HCT116 (cell line): ENCODE measurements at regions of chr3 and their contacts with region 1.

Region 1: DNA sequence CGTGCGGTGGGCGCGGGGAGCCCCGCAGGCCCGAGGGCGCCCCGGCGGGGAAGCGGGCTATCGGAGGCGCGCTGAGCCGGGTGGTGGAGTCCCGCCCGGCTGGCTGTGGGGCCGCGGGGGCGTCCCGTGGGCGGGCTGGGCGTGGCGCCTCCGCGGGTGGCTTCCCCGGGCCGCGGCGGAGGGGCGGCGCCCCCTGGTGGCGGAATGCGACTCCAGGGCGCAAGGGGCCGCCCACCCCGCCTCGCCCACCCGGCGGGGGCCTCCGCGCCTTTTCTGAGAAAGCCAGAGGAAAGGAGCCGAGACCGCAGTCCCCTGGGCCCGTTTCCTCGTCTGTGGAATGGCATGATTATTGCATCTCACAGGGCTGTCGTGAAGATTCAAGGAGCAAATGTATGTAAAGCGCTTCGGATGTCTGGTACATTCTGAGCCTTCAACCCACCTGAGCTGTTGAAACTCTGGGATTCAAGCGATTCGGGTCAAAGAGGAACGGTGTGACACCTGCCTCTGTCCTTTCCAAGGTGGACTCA is 31.9 kb upstream of the RAB6B start:
- DNase-seq: no peak
- ATAC-seq: peak; percentile 85
- H3K4me3 ChIP-seq: peak overlapping the region in 1 of 2 experiments; percentile 16; a peak in 1 of 4 replicates
- H3K27ac ChIP-seq: no peak overlapping the region
- H3K4me1 ChIP-seq: peaks cover 0 to 9% of the 10 kb centered on the region in 2 experiments; a peak in 2 of 4 replicates
- H3K27me3 ChIP-seq: no peaks in the 10 kb centered on the region; the same call in 1 of the 2 replicates
- CTCF ChIP-seq: peak; percentile 12 to 68 (median 62); a peak in 4 of 6 replicates
- POLR2A ChIP-seq: no peak
- RAD21 ChIP-seq: peak; percentile 61

Region 2: GRCh38 chr3:133464573-133464972 is 463.0 kb before region 1 on chr3:
- CTCF ChIA-PET with region 1: no interaction called
- POLR2A ChIA-PET with region 1: no interaction called
- RAD21 ChIA-PET with region 1: no interaction called
- intact Hi-C with region 1: loop called (anchors 10 kb)
- DNase-seq: no peak
- ATAC-seq: peak; percentile 85
- H3K4me3 ChIP-seq: no peak overlapping the region
- H3K27ac ChIP-seq: no peak overlapping the region
- H3K4me1 ChIP-seq: no peaks in the 10 kb centered on the region
- H3K27me3 ChIP-seq: no peaks in the 10 kb centered on the region
- CTCF ChIP-seq: peak; percentile 34 to 48 (median 42); a peak in 4 of 6 replicates
- POLR2A ChIP-seq: no peak
- RAD21 ChIP-seq: peak; percentile 58

Region 3: DNA sequence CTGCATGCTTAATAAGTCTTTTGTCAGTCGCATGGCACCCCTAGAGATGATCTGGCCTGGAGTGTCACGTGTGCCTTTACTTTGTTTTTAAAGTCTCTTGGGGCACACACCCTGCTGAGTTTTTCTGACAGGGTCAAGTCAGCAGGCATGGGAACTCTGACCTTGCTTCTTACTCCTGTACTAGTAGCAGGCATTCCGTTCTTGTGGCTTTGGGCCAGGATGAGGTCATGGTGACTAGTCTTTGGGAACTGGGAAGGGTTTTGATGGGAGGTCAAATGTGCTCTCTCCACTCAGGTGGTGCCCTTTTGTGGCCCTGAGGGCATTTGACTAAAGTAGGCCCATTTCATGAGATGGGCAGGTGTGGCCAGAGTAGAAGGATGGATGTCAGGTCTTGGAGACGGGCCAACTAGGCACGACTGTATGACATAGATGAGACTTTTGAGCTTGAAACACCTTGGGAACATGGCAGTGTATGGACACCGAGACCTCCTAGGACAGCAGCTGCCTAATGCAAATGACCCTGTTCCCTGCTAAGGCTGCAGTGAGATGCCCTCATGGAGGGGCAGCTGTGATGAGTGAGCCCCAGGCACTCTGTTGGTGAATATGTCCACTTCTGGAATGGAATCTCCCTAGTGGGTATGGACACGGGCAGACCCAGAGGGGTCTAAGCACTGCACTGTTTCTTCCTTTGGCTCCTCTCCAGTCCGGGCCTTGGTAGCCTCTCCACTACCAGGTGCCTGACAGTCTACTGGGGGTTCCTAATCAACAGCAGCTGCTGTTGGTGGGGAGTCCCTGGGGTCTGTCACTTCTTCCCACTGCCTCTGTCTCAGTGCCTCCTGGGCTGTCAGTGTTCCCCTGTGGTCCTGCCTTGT is 105.6 kb before region 1 on chr3:
- CTCF ChIA-PET with region 1: interaction called, 3 read pairs
- POLR2A ChIA-PET with region 1: no interaction called
- RAD21 ChIA-PET with region 1: no interaction called
- intact Hi-C with region 1: loop called (anchors 2 kb)
- DNase-seq: peak; percentile 55
- ATAC-seq: peak; percentile 82
- H3K4me3 ChIP-seq: no peak overlapping the region
- H3K27ac ChIP-seq: no peak overlapping the region
- H3K4me1 ChIP-seq: no peaks in the 10 kb centered on the region; a peak in 1 of 4 replicates
- H3K27me3 ChIP-seq: no peaks in the 10 kb centered on the region
- CTCF ChIP-seq: peak; percentile 29 to 51 (median 43); a peak in 4 of 6 replicates
- POLR2A ChIP-seq: no peak
- RAD21 ChIP-seq: peak; percentile 55

Region 4: DNA sequence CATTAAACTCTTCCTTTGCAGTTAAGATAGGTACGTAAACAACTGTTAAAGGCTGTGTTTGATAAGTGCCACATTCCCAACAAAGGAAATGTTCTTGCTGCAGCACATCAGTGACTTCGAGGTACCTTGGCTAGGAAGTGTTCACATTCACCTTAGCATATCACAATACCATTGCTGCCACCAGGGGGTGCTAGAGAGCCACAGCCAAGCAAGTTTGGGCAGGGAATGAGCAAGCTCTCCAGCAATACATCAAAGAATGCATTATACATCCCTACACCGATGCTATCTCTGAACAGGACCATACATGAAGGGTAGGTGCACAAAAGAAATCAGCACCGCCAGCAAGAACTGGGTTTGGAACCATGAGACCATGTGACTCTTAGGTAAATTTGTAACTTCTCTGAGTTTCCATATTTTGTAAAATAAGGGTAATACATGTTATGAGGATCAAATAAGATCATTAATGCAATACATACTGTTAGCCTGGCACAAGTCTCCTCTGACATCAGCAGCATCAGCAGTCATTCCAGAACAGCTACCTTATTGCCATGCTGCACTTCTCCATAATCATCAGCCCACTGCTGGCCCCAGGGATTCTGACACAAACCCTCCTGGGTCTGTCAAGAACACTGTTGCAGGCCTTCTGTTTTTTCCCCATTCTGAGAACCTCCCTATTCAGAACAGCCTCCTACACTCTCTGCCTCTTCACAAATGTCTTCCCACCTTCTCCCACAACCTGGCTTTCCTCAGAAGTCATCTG is 285.5 kb after region 1 on chr3:
- CTCF ChIA-PET with region 1: interaction called, 26 read pairs
- POLR2A ChIA-PET with region 1: no interaction called
- RAD21 ChIA-PET with region 1: no interaction called
- intact Hi-C with region 1: loop called (anchors 1 kb)
- DNase-seq: peak; percentile 60
- ATAC-seq: peak; percentile 94
- H3K4me3 ChIP-seq: no peak overlapping the region
- H3K27ac ChIP-seq: no peak overlapping the region
- H3K4me1 ChIP-seq: no peaks in the 10 kb centered on the region
- H3K27me3 ChIP-seq: no peaks in the 10 kb centered on the region
- CTCF ChIP-seq: peak; percentile 84 to 99 (median 96)
- POLR2A ChIP-seq: no peak
- RAD21 ChIP-seq: peak; percentile 82

Region 5: DNA sequence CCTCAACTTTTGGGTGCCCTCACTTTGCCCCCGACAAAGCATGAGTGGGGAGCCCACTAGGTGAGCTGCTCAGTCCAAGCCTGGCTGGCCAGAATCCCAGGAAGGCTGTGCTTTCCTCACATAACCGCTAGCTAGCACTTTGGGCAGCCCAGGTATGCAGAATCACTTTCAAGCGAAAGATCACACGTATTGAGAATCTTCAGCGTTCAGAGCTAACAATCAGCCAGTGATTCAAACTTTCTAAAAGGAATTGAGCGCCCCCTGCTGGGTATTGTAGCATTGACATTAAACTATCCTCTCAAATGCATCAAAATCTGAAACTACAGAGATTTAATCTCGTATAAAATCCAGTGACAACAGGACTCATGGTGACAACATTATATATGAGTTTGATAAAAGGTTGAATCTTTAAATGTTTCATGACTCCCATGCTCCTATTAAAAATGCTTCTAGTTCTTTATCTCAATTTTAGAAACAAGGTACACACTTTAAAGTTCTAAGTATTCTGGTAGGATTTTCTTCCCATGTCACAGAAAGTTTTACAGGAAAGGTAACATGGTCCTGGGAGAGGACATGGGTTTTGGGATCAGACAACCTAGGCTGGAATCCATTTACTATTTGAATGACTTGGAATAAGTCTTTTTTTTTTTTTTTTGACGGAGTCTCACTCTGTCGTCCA is 546.4 kb after region 1 on chr3:
- CTCF ChIA-PET with region 1: no interaction called
- POLR2A ChIA-PET with region 1: no interaction called
- RAD21 ChIA-PET with region 1: no interaction called
- intact Hi-C with region 1: loop called (anchors 5 kb)
- DNase-seq: peak; percentile 51
- ATAC-seq: peak; percentile 89
- H3K4me3 ChIP-seq: no peak overlapping the region
- H3K27ac ChIP-seq: no peak overlapping the region
- H3K4me1 ChIP-seq: peaks cover 3 to 16% of the 10 kb centered on the region in 2 experiments; a peak in 3 of 4 replicates
- H3K27me3 ChIP-seq: no peaks in the 10 kb centered on the region
- CTCF ChIP-seq: peak; percentile 66 to 87 (median 80)
- POLR2A ChIP-seq: no peak
- RAD21 ChIP-seq: peak; percentile 95